OCI-LY7 (cell line): ENCODE measurements at regions of chr14 and their contacts with region 1.

Region 1: DNA sequence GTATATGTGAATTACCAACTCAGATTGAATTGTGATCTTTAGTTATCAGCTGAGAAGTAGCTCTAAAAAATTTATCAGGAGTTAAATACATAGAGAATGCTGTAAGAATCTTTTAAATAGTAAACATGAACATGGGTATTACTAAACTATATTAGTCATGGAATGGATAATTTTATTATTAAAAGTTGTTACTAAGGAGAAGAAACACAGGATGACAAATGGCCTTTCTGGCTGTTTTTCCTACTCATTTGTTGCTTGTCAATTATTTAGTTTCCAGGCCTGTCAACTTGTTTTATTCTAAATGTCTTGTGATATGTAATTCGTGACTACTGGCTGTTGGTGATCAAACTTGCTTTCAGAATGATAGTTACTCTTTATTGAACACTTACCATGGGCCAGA is 58.7 kb downstream of the KTN1 start:
- DNase-seq: no peak
- H3K4me3 ChIP-seq: no peak overlapping the region
- H3K27ac ChIP-seq: no peak overlapping the region
- H3K4me1 ChIP-seq: no peaks in the 10 kb centered on the region
- CTCF ChIP-seq: no peak

Region 2: DNA sequence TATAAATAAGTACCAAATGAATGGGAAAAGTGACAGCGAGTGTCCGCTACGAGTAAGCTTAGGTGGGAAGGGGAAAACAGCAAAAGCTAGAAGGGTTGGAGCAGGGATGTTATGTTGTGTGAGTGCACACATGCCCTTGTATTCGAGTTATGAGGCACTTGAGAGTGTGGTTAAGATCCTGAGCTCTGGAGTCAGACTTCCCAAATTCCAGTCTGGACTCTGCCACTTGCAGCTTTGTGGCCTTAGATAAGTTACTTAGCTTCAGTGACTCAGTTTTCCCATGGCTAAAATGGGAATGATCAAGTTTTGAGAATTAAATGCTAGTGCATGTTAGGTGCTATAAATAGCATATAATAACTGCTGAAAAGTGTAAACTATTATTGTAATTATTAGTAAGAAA is 13.8 kb before region 1 on chr14:
- CTCF ChIA-PET with region 1: no interaction called
- POLR2A ChIA-PET with region 1: interaction called, 12 read pairs
- intact Hi-C with region 1: no loop called
- DNase-seq: no peak
- H3K4me3 ChIP-seq: no peak overlapping the region
- H3K27ac ChIP-seq: no peak overlapping the region
- H3K4me1 ChIP-seq: no peaks in the 10 kb centered on the region
- CTCF ChIP-seq: no peak

Region 3: GRCh38 chr14:55874785-55875184 is 236.1 kb after region 1 on chr14:
- CTCF ChIA-PET with region 1: no interaction called
- POLR2A ChIA-PET with region 1: no interaction called
- intact Hi-C with region 1: no loop called
- DNase-seq: no peak
- H3K4me3 ChIP-seq: no peak overlapping the region
- H3K27ac ChIP-seq: no peak overlapping the region
- H3K4me1 ChIP-seq: no peaks in the 10 kb centered on the region
- CTCF ChIP-seq: no peak